MCF 10A (cell line): ENCODE measurements at regions of chr7 and their contacts with region 1.

Region 1: GRCh38 chr7:87876040-87876868 is at the starts of genes DBF4 and SLC25A40:
- DNase-seq: peak; percentile 95
- H3K4me3 Mint-ChIP-seq: peak within 1 kb of the TSS; percentile 98
- H3K27ac Mint-ChIP-seq: peak within 1 kb of the TSS; percentile 98
- H3K4me1 Mint-ChIP-seq: peaks cover 26% of the 10 kb centered on the region
- H3K27me3 Mint-ChIP-seq: no peaks in the 10 kb centered on the region
- CTCF ChIP-seq: no peak
- total RNA-seq, gene DBF4: 19.0 and 27.4 TPM in 2 replicates
- total RNA-seq, gene SLC25A40: 10.7 and 12.8 TPM in 2 replicates

Region 2: GRCh38 chr7:87345166-87345927 is 530.9 kb before region 1 on chr7 and contains the start of gene CROT:
- CTCF ChIA-PET with region 1: interaction called, 4 read pairs
- POLR2A ChIA-PET with region 1: no interaction called
- intact Hi-C with region 1: loop called (anchors 5 kb)
- DNase-seq: peak; percentile 96
- H3K4me3 Mint-ChIP-seq: peak within 1 kb of the TSS; percentile 99
- H3K27ac Mint-ChIP-seq: peak within 1 kb of the TSS; percentile 88
- H3K4me1 Mint-ChIP-seq: peaks cover 28% of the 10 kb centered on the region
- H3K27me3 Mint-ChIP-seq: no peaks in the 10 kb centered on the region
- CTCF ChIP-seq: no peak
- total RNA-seq, gene CROT: 5.7 and 6.5 TPM in 2 replicates

Region 3: DNA sequence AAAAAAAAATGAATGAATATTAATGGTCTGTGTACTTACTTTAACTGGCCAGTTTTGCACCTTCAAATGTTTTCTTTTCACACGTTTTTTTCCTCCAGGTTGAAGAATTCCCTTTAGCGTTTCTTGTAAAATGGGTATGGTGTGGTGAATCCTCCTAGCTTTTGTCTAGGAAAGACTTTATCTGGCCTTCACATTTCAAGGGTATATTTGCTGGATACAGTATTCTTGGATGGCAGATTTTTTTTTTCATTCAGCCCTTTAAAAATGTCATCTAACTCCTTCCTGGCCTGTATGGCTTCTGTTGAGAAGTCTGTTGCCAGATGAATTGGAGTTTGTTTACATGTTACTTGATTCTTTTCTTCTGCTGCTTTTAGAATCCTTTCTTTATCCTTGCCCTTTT is 10.2 kb before region 1 on chr7:
- CTCF ChIA-PET with region 1: no interaction called
- POLR2A ChIA-PET with region 1: interaction called, 12 read pairs
- intact Hi-C with region 1: no loop called
- DNase-seq: no peak
- H3K4me3 Mint-ChIP-seq: no peak overlapping the region
- H3K27ac Mint-ChIP-seq: no peak overlapping the region
- H3K4me1 Mint-ChIP-seq: peaks cover 6% of the 10 kb centered on the region
- H3K27me3 Mint-ChIP-seq: no peaks in the 10 kb centered on the region
- CTCF ChIP-seq: no peak